Ovary (tissue), 10 donors: ENCODE measurements at regions of chr13 and their contacts with region 1.

Region 1: DNA sequence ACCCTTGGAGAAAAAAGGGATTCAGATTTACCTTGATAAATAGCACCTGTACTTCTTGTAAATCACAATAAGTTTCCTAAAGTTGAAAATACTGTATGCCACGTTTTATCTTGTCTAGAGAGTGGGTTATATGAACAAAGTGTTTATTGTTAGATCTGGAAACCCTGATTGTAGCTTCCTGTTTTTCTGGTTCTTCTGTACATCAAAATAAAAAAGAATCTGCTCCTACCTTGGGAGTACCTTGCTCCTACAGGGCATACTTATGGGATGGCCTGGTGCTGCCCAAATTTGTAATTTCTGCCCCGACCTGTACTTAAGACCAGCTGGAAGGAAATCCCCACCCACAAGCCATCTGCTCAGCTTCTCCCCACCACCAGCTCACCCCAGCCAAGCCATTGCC is 241.1 kb downstream of the SLC7A1 start:
- DNase-seq: no peak
- H3K4me3 ChIP-seq: no peak overlapping the region
- H3K27ac ChIP-seq: no peak overlapping the region
- H3K4me1 ChIP-seq: no peaks in the 10 kb centered on the region
- H3K27me3 ChIP-seq: no peaks in the 10 kb centered on the region
- CTCF ChIP-seq: no peak
- EP300 ChIP-seq: no peak
- POLR2A ChIP-seq: no peak

Region 2: DNA sequence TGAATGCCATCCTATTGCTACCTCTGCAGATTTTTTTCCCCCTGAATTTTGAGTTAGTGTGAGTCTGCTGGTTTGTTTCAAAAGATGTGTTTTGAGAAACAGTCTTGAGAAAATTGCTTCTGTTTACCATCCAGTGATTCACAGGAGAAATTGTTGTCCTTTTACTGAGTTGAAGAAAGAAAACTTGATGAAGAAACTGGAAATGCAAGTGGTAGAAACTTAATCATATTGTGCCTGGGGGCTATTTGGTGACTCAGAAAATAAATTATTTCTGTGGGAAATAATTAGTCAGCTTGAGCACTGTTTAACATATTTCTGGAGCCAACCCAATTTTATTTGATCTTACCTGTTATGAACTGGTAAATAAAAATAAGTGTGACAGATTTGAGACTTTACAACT is 1180.6 kb before region 1 on chr13:
- intact Hi-C with region 1: no loop called
- DNase-seq: no peak
- H3K4me3 ChIP-seq: no peak overlapping the region
- H3K27ac ChIP-seq: no peak overlapping the region
- H3K4me1 ChIP-seq: no peaks in the 10 kb centered on the region
- H3K27me3 ChIP-seq: no peaks in the 10 kb centered on the region
- CTCF ChIP-seq: no peak
- EP300 ChIP-seq: no peak
- POLR2A ChIP-seq: no peak

Region 3: GRCh38 chr13:29081036-29081435 is 273.3 kb before region 1 on chr13:
- intact Hi-C with region 1: no loop called
- DNase-seq: no peak
- H3K4me3 ChIP-seq: no peak overlapping the region
- H3K27ac ChIP-seq: no peak overlapping the region
- H3K4me1 ChIP-seq: no peaks in the 10 kb centered on the region
- H3K27me3 ChIP-seq: no peaks in the 10 kb centered on the region
- CTCF ChIP-seq: no peak
- EP300 ChIP-seq: no peak
- POLR2A ChIP-seq: no peak

Region 4: DNA sequence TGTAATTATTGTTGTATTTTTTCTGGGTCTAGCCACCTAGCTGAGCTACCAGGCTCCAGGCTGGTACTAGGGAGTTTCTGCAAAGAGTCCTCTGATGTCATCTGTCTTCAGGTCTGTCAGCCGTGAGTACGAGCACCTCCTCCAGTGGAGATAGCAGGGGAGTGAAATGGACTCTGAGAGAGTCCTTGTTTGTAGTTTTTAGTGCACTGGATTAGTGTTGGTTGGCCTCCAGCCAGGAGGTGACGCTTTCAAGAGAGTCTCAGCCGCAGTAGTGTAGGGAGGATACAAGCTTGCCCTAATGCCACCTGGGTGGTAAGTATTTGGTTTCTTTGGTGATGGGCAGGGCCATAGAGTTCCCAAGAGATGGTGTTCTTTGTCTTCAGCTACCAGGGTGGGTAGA is 143.7 kb before region 1 on chr13:
- intact Hi-C with region 1: loop called in 1 of 4 experiments (anchors 5 kb)
- DNase-seq: no peak
- H3K4me3 ChIP-seq: no peak overlapping the region
- H3K27ac ChIP-seq: no peak overlapping the region
- H3K4me1 ChIP-seq: no peaks in the 10 kb centered on the region
- H3K27me3 ChIP-seq: no peaks in the 10 kb centered on the region
- CTCF ChIP-seq: no peak
- EP300 ChIP-seq: no peak
- POLR2A ChIP-seq: no peak

Region 5: DNA sequence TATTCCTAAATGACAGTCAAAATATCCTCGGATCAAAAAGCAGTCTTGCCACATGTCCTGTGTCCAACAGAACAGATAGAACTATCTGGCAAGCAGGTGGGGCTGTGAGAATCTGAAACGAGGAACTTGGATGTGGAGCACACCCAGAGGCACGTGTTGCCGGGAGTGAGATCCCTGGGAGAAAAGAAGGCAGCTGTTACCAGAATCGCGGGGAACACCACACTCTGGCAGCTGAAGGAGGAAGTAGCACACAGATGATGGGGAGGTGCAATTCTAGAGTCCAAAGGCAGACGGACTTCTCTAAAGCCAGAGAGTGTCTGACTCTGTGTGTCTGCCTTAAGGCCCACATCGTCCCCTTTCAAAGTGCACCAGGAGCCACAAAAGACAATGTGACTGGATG is 218.8 kb after region 1 on chr13:
- intact Hi-C with region 1: no loop called
- DNase-seq: peak in 2 of 5 donors; percentile 24
- H3K4me3 ChIP-seq: no peak overlapping the region
- H3K27ac ChIP-seq: no peak overlapping the region
- H3K4me1 ChIP-seq: peaks cover 3% of the 10 kb centered on the region
- H3K27me3 ChIP-seq: no peaks in the 10 kb centered on the region
- CTCF ChIP-seq: no peak
- EP300 ChIP-seq: no peak
- POLR2A ChIP-seq: no peak